CD4-positive, alpha-beta T cell (primary cell): ENCODE measurements at regions of chr15 and their contacts with region 1.

Region 1: GRCh38 chr15:72249142-72249810 is 18.3 kb upstream of the PKM start:
- DNase-seq: no peak
- ATAC-seq: no peak
- H3K4me3 ChIP-seq: no peak overlapping the region
- H3K4me3 Mint-ChIP-seq: no peak overlapping the region
- H3K27ac ChIP-seq: no peak overlapping the region
- H3K27ac Mint-ChIP-seq: peak overlapping the region; percentile 15
- H3K4me1 ChIP-seq: no peaks in the 10 kb centered on the region
- H3K4me1 Mint-ChIP-seq: no peaks in the 10 kb centered on the region
- H3K27me3 ChIP-seq: no peaks in the 10 kb centered on the region
- H3K27me3 Mint-ChIP-seq: no peaks in the 10 kb centered on the region
- CTCF ChIP-seq: no peak

Region 2: GRCh38 chr15:72047020-72047419 is 202.3 kb before region 1 on chr15:
- CTCF ChIA-PET with region 1: no interaction called
- POLR2A ChIA-PET with region 1: no interaction called
- intact Hi-C with region 1: no loop called
- DNase-seq: no peak
- ATAC-seq: no peak
- H3K4me3 ChIP-seq: no peak overlapping the region
- H3K4me3 Mint-ChIP-seq: no peak overlapping the region
- H3K27ac ChIP-seq: no peak overlapping the region
- H3K27ac Mint-ChIP-seq: no peak overlapping the region
- H3K4me1 ChIP-seq: peaks cover 5% of the 10 kb centered on the region
- H3K4me1 Mint-ChIP-seq: peaks cover 18% of the 10 kb centered on the region
- H3K27me3 ChIP-seq: no peaks in the 10 kb centered on the region
- H3K27me3 Mint-ChIP-seq: no peaks in the 10 kb centered on the region
- CTCF ChIP-seq: no peak

Region 3: DNA sequence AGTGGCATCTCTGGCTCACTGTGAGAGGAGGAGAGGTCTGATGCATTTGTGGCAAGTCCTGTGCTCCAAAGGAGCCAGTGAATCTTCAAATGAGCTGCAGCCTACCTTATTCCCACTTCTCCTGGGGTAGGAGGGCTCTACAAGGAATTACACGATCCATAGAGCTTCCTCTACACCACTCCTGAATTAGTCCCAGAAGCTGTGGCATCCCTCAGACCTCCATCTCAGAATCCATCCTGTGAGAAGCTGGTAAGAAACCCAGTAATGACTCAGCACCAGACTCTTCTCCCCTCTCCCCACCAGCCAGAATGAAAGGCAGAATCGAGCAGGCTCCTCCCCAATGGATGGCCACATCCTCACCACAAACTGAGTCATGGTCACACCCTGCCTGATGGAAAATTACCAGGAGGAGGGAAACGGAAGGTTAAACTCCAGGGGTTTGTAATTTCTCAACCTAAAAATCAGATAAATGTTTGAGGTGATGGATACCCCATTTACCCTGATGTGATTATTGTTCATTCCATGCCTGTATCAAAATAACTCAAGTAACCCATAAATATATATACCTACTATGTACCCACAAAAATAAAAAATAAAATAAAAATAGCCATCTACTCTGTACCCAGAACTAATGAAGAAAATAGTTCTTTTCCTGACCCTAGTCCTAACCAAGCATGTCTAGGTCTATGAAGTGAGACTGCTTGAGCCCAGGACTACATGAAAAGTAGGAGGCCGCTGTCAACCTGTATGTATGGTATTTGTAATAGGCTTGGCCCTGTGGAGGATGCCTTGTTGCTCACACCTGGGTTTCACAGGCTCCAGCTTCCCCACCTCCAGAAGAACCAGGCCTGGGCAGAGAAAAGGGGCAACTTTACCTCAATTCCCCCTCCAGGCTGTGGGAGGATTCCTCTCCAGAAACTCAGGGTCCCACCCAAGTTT is 11.7 kb before region 1 on chr15:
- CTCF ChIA-PET with region 1: interaction called, 11 read pairs
- POLR2A ChIA-PET with region 1: interaction called, 3 read pairs
- intact Hi-C with region 1: no loop called
- DNase-seq: peak in 11 of 14 experiments; percentile 7 to 74 (median 25)
- ATAC-seq: peak; percentile 65
- H3K4me3 ChIP-seq: no peak overlapping the region
- H3K4me3 Mint-ChIP-seq: no peak overlapping the region
- H3K27ac ChIP-seq: no peak overlapping the region
- H3K27ac Mint-ChIP-seq: peak overlapping the region; percentile 61
- H3K4me1 ChIP-seq: peaks cover 20% of the 10 kb centered on the region
- H3K4me1 Mint-ChIP-seq: peaks cover 22% of the 10 kb centered on the region
- H3K27me3 ChIP-seq: no peaks in the 10 kb centered on the region
- H3K27me3 Mint-ChIP-seq: no peaks in the 10 kb centered on the region
- CTCF ChIP-seq: no peak

Region 4: GRCh38 chr15:72265031-72265430 is 15.8 kb after region 1 on chr15:
- CTCF ChIA-PET with region 1: no interaction called
- POLR2A ChIA-PET with region 1: no interaction called
- intact Hi-C with region 1: no loop called
- DNase-seq: no peak
- ATAC-seq: no peak
- H3K4me3 ChIP-seq: no peak overlapping the region
- H3K4me3 Mint-ChIP-seq: no peak overlapping the region
- H3K27ac ChIP-seq: no peak overlapping the region
- H3K27ac Mint-ChIP-seq: peak overlapping the region; percentile 29
- H3K4me1 ChIP-seq: no peaks in the 10 kb centered on the region
- H3K4me1 Mint-ChIP-seq: peaks cover 2% of the 10 kb centered on the region
- H3K27me3 ChIP-seq: no peaks in the 10 kb centered on the region
- H3K27me3 Mint-ChIP-seq: no peaks in the 10 kb centered on the region
- CTCF ChIP-seq: no peak